WTC11 (cell line): ENCODE measurements at regions of chr17 and their contacts with region 1.

Region 1: GRCh38 chr17:28416703-28417311 is 10.8 kb upstream of the SLC46A1 start:
- DNase-seq: peak; percentile 72
- ATAC-seq: peak; percentile 95
- H3K4me3 Mint-ChIP-seq: no peak overlapping the region
- H3K27ac Mint-ChIP-seq: no peak overlapping the region
- H3K4me1 Mint-ChIP-seq: peaks cover 13% of the 10 kb centered on the region
- H3K27me3 Mint-ChIP-seq: peaks cover 63% of the 10 kb centered on the region
- CTCF ChIP-seq: peak; percentile 70; the same call in 1 of the 2 replicates

Region 2: GRCh38 chr17:28335201-28335955 is 81.4 kb before region 1 on chr17 and contains the starts of genes IFT20 and TNFAIP1:
- CTCF ChIA-PET with region 1: interaction called, 15 read pairs
- POLR2A ChIA-PET with region 1: no interaction called
- DNase-seq: peak; percentile 99
- ATAC-seq: peak; percentile 97
- H3K4me3 Mint-ChIP-seq: peak within 1 kb of the TSS; percentile 99
- H3K27ac Mint-ChIP-seq: peak within 1 kb of the TSS; percentile 99
- H3K4me1 Mint-ChIP-seq: peaks cover 20% of the 10 kb centered on the region
- H3K27me3 Mint-ChIP-seq: no peaks in the 10 kb centered on the region
- CTCF ChIP-seq: no peak
- total RNA-seq, gene IFT20: 17.6 to 19.3 TPM (median 18.3 TPM) in 3 replicates
- total RNA-seq, gene TNFAIP1: 16.9 to 21.3 TPM (median 17.1 TPM) in 3 replicates

Region 3: DNA sequence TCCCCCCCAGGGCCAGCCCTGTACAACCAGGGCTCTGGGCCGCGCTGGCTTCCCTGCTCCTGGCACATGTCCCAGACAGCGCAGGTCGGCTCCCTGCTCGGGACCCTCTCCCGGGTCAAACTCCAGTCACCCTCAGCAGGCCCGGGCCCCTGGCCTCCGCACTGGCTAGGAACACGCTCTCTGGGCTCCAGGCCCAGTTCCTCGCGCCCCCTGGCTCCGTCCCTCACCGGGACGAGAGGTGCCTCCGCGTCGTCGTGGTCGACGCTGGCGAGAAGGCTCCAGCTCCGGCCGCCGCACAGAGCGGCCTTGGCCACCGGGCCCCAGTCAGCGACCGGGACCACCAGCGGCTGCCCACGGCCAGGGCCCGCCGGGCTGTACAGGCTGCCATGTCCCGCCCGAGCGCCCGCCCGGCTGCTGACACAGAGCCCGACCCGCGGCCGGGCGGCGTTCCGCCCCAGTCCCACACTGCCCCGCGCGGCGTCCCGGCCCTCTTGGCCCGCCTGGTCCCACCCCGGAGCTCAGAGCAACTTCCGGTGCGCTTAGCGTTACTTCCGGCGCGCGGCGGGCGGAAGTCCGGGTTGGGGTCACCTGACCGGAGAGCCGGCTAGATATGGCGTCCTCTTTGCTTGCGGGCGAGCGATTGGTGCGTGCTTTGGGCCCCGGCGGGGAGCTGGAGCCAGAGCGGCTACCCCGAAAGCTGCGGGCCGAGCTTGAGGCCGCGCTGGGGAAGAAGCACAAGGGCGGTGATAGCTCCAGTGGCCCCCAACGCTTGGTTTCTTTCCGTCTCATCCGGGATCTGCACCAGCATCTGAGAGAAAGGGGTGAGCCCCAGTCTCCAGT is 59.5 kb before region 1 on chr17 and contains the start of gene POLDIP2:
- CTCF ChIA-PET with region 1: interaction called, 13 read pairs
- POLR2A ChIA-PET with region 1: no interaction called
- DNase-seq: peak; percentile 95
- ATAC-seq: peak; percentile 99
- H3K4me3 Mint-ChIP-seq: peak within 1 kb of the TSS; percentile 91
- H3K27ac Mint-ChIP-seq: peak within 1 kb of the TSS; percentile 98
- H3K4me1 Mint-ChIP-seq: peaks cover 13% of the 10 kb centered on the region
- H3K27me3 Mint-ChIP-seq: no peaks in the 10 kb centered on the region
- CTCF ChIP-seq: no peak
- total RNA-seq, gene POLDIP2: 79.2 to 85.4 TPM (median 79.7 TPM) in 3 replicates

Region 4: DNA sequence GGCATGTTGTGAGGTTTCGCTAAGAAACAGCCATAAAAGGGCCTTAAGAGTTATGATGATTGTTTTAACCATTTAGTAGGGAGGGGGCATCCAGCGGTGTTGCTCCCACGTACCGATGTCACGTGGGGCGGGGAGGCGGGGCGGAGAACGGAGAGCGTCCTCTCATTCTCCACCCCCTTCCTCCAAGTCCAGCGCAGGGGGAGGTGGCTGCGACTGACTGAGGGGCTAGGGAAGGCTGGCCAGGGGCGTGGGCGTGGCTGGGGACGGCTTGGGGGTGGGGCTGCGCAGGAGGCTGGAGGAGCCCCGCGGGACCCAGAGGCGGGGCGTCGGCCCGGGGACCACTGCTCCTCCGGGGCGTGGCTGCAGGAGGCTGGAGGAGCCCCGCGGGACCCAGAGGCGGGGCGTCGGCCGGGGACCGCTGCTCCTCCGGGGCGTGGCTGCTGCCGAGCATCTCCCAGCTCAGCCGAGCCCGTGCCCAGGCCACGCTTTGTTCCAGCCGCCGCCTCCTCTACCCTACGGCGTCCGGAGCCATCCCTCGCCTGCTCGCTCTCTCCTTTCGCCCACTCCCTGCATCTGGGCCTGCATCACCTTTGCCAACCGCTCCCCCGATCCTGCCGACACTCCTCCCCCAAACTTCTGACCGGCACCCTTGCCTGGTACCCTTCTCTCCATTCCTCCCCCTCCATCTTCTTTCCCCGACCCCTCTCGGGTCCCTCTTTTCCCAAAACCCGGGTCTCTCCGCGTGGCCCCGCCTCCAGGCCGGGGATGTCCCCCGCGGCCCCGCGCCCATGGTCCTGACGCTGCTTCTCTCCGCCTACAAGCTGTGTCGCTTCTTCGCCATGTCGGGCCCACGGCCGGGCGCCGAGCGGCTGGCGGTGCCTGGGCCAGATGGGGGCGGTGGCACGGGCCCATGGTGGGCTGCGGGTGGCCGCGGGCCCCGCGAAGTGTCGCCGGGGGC is 45.3 kb before region 1 on chr17 and contains the start of gene SARM1:
- CTCF ChIA-PET with region 1: interaction called, 19 read pairs
- POLR2A ChIA-PET with region 1: no interaction called
- DNase-seq: peak; percentile 99
- ATAC-seq: peak; percentile 93
- H3K4me3 Mint-ChIP-seq: peak within 1 kb of the TSS; percentile 75
- H3K27ac Mint-ChIP-seq: peak within 1 kb of the TSS; percentile 92
- H3K4me1 Mint-ChIP-seq: peaks cover 21% of the 10 kb centered on the region
- H3K27me3 Mint-ChIP-seq: peaks cover 45% of the 10 kb centered on the region
- CTCF ChIP-seq: no peak
- total RNA-seq, gene SARM1: 3.8 to 4.7 TPM (median 4.7 TPM) in 3 replicates

Region 5: GRCh38 chr17:28384281-28385036 is 32.3 kb before region 1 on chr17:
- CTCF ChIA-PET with region 1: interaction called, 63 read pairs
- POLR2A ChIA-PET with region 1: no interaction called
- DNase-seq: peak; percentile 53
- ATAC-seq: peak; percentile 52
- H3K4me3 Mint-ChIP-seq: peak overlapping the region; percentile 89
- H3K27ac Mint-ChIP-seq: no peak overlapping the region
- H3K4me1 Mint-ChIP-seq: peaks cover 11% of the 10 kb centered on the region
- H3K27me3 Mint-ChIP-seq: peaks cover 83% of the 10 kb centered on the region
- CTCF ChIP-seq: no peak

Region 6: DNA sequence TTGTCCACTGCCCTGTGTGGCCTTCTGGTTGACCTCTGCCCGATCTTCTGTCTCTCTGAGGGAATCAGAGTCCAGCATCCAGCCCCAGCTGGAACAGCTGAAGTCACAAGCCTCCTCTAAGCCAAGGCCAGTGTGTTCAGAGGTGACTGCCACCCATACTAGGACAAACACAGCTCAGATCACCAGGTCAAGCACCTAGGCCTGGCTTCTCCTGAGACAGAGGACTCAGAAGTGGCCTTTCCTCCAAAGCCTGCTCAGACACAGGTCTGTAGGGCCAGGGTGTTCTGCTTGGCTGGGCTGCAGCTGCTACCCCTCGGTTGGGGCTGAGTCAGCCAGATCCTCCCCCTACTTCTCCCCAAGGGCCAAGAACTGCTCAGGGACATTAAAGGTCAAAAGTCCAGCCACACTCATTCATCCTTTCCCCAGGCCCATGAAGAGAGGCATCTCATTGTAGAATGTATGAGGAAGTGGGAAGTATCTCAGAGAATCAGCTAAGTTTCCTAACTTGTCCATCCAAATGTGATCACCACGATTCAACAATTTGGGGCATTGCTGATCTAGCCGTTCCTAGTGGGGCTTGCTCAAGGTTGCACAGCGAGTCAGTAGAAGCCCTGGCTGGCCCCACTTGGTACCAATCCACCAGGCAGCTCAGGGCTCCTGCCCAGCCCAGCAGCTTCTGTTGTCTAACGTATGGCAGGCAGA is 18.4 kb before region 1 on chr17:
- CTCF ChIA-PET with region 1: interaction called, 10 read pairs
- POLR2A ChIA-PET with region 1: no interaction called
- DNase-seq: no peak
- ATAC-seq: no peak
- H3K4me3 Mint-ChIP-seq: no peak overlapping the region
- H3K27ac Mint-ChIP-seq: no peak overlapping the region
- H3K4me1 Mint-ChIP-seq: peaks cover 27% of the 10 kb centered on the region
- H3K27me3 Mint-ChIP-seq: peaks cover 18% of the 10 kb centered on the region
- CTCF ChIP-seq: no peak

Region 7: DNA sequence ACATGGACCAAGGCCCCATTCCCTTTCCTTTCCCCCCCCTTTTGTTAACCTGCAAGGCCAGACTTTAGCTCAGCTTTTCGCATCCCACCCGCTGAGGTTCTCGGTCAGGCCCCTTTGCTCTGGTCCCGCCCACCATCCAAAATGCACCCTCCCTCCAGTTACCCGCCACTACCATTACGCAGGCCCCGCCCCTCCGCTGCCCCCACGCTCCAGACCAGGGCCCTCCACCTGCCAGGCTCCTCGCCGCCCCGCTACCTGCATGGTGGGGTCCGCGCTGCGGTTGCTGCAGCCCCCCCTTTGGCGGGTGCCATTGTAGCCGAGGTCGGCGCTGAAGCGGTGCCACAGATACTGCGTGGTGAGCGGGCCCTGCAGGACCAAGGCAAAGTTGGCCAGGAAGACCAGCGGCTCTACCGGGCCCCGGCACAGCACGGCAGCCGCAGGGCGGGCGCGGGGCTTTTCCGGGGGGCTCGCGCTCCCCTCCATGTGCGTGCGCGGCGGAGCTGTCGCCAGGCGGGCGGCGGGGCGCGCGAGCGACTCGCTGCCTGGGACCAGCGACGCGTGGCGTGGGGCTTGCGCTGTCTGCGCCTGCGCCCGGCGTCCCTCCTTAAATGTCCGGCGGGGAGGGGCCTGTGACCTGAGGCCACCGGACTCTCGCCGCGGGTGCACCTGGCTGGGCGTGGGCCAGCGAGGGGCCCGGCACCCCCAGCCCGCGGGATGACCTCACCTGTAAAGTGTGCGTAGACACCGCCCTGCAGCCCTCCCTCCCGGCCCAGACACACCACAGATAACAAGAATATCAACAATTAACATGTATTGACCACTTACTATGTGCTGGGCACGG is 11.0 kb before region 1 on chr17 and contains the start of gene SLC46A1:
- CTCF ChIA-PET with region 1: interaction called, 62 read pairs
- POLR2A ChIA-PET with region 1: interaction called, 6 read pairs
- DNase-seq: peak; percentile 80
- ATAC-seq: peak; percentile 53
- H3K4me3 Mint-ChIP-seq: peak within 1 kb of the TSS; percentile 78
- H3K27ac Mint-ChIP-seq: peak within 1 kb of the TSS; percentile 87
- H3K4me1 Mint-ChIP-seq: peaks cover 78% of the 10 kb centered on the region
- H3K27me3 Mint-ChIP-seq: peaks cover 31% of the 10 kb centered on the region
- CTCF ChIP-seq: no peak
- total RNA-seq, gene SLC46A1: 5.7 to 6.7 TPM (median 6.6 TPM) in 3 replicates

Region 8: DNA sequence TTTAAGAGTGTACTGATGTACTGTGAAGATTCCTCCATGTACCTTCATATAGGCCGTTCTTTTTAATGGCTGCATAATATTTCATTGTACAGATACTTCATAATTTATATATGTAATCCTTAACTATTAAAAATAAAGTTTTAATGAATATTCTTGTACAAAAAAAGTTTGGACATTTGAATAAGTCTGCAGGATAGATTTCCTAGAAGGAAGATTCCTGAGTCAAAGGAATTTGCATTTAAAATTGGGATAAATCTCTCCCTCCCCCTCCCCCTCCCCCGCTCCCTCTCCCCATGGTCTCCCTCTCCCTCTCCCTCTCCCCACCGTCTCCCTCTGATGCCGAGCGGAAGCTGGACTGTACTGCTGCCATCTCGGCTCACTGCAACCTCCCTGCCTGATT is 41.1 kb after region 1 on chr17:
- CTCF ChIA-PET with region 1: no interaction called
- POLR2A ChIA-PET with region 1: no interaction called
- DNase-seq: no peak
- ATAC-seq: no peak
- H3K4me3 Mint-ChIP-seq: no peak overlapping the region
- H3K27ac Mint-ChIP-seq: no peak overlapping the region
- H3K4me1 Mint-ChIP-seq: no peaks in the 10 kb centered on the region
- H3K27me3 Mint-ChIP-seq: peaks cover 16% of the 10 kb centered on the region
- CTCF ChIP-seq: no peak